ENCODE measurements at regions of chr4 and their contacts with region 1.

Region 1: GRCh38 chr4:39181905-39182638 is at the start of gene WDR19:
- DNase-seq: peak; percentile 97 to 99
- H3K4me3 ChIP-seq: peak within 1 kb of the TSS; percentile 71 to 87
- H3K27ac ChIP-seq: peak within 1 kb of the TSS; percentile 41 to 66
- H3K4me1 ChIP-seq: peaks cover 0 to 4% of the 10 kb centered on the region in 2 donors
- H3K27me3 ChIP-seq: no peaks in the 10 kb centered on the region
- CTCF ChIP-seq: peak; percentile 28 to 59 (median 40)
- total RNA-seq, gene WDR19: 28.3 TPM

Region 2: GRCh38 chr4:37686373-37687193 is 1495.5 kb before region 1 on chr4 and contains the start of gene RELL1:
- intact Hi-C with region 1: loop called (anchors 10 kb)
- DNase-seq: peak; percentile 98 to 100
- H3K4me3 ChIP-seq: peak within 1 kb of the TSS; percentile 97 to 100
- H3K27ac ChIP-seq: peak within 1 kb of the TSS; percentile 96 to 99
- H3K4me1 ChIP-seq: peaks cover 6 to 7% of the 10 kb centered on the region in 2 donors
- H3K27me3 ChIP-seq: no peaks in the 10 kb centered on the region
- CTCF ChIP-seq: no peak
- total RNA-seq, gene RELL1: 61.5 TPM

Region 3: DNA sequence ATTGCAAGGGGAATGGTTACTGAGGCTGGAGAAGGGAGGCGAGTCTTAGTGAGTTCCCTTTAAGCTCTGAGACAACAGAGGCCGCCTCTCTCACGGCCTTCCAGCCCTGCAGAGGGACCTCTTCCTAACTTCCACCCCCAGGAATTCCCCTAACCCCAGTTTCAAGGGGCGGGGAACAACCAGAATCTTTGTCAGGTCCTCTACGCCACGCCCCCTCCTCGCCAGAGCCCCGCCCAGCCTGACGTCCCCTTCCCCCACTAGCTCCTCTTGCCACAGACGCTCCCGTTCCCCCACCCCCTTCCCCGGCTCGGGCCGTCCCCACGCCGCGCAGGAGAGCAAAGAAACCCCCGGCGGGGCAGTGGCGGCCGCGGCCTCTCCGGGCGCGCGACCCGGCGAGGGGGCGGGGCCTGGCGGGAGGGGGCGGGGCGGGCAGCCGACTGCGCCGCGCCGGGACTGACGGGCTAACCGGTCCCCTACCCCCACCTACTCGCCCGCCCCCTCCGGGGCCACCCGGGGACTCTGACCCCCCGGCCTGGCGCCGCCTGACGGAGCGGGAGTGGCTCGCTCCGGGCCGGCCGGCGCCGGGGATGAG is 137.6 kb before region 1 on chr4:
- intact Hi-C with region 1: loop called (anchors 1 kb)
- DNase-seq: peak; percentile 81 to 95
- H3K4me3 ChIP-seq: peak overlapping the region; percentile 85 to 93
- H3K27ac ChIP-seq: peak overlapping the region; percentile 77 to 87
- H3K4me1 ChIP-seq: no peaks in the 10 kb centered on the region
- H3K27me3 ChIP-seq: no peaks in the 10 kb centered on the region
- CTCF ChIP-seq: no peak

Region 4: DNA sequence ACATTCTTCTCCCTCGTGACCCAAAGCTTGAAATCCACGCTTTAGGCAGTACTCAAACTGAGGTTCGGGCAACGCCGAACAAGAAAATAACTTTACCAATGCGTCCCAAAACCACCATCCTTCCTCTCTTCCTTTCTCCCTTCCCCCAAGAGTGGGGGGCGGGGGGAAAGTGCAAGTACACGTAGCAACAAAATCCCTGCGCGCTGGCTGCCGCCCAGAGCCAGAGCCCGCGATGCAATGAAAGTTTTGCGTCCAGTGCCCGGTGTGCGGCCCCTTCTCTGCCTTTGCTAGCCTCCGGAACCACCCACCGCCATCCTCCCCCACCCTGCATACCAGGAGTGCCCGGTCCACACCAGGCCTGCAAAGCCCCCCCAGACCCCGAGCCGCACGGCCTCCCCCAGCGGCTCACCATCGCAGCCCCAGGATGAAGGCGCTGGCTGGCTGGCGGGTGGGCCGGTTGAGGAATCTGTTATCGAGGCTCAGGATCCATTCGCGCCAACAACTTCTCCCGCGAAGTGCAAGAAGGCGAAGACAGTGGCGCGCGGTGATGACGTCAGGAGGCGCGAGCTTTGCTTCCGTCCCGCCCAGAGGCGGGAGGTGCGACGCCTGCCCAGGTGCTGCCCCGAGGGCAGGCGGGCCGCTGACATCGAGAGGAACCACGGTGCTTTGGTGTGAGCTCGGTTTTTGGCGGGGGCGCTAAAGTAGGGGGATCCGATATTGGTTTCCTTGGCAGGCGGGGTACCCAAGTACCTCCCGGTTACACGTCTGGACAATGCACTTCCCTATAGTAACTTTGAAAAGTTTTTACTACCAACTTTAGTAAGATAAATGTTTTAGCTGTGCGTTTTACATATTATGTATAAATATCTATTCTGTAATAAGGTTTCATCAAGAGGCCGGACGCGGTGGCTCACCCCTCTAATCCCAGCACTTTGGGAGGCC is 184.0 kb after region 1 on chr4 and contains the start of gene RFC1:
- intact Hi-C with region 1: loop called (anchors 5 kb)
- DNase-seq: peak; percentile 56 to 95
- H3K4me3 ChIP-seq: peak within 1 kb of the TSS; percentile 91 to 95
- H3K27ac ChIP-seq: peak within 1 kb of the TSS; percentile 80 to 82
- H3K4me1 ChIP-seq: peaks cover 0 to 9% of the 10 kb centered on the region in 2 donors
- H3K27me3 ChIP-seq: no peaks in the 10 kb centered on the region
- CTCF ChIP-seq: no peak
- total RNA-seq, gene RFC1: 39.5 TPM

Region 5: DNA sequence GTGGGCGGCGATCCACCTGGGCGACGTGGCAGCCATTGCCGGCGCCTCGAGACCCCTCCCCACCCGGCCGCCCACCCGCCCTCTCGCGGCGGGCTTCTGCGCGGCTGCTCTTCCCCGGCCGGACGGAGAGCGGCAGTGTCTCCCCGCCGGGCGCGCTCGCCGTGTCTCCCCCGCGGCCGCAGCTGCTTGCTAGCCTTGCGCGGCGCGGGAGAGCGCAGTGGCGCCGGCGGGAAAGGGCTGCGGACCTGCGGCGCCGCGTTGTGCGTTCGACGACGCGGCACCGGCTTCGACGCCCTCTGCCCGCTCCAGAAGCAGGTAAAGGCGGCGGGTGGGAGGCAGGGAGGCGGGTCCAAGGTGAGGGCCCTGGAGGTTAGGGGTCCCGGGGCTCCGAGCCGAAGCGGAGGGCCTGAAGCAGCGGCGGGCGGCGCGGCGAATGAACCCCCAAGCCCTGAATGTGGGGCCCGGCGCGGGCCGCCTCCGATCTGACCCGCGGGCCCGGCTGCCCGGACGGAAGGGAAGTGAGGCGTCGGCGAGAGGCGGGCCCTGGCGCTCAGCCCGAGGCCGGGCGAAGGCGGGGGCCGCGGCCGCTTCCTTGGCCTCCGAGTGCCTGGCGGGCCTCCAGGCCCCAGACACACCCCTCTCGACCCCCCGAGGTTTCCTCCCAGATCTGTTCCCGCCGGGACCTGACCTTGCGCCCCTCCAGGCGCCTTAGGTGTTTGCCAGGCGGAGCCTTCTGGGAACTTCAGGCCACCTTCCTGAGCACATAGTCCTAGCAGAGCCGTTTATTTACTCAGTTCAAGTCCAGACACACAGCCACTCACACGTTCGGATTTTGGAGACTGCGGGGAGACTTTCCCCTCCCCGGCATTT is 874.9 kb after region 1 on chr4 and contains the start of gene N4BP2:
- intact Hi-C with region 1: loop called (anchors 5 kb)
- DNase-seq: peak; percentile 21 to 88
- H3K4me3 ChIP-seq: peak within 1 kb of the TSS; percentile 72 to 98
- H3K27ac ChIP-seq: peak within 1 kb of the TSS; percentile 97 to 100
- H3K4me1 ChIP-seq: peaks cover 0 to 11% of the 10 kb centered on the region in 2 donors
- H3K27me3 ChIP-seq: no peaks in the 10 kb centered on the region
- CTCF ChIP-seq: peak; percentile 47 to 77 (median 74)
- total RNA-seq, gene N4BP2: 0.53 TPM

Measured in ascending aorta (tissue), 2 donors.